Heart right ventricle (tissue), 16 donors: ENCODE measurements at regions of chr6 and their contacts with region 1.

Region 1: GRCh38 chr6:27532820-27533538 is 60.1 kb upstream of the ZNF184 start:
- DNase-seq: no peak
- ATAC-seq: no peak
- H3K4me3 ChIP-seq: no peak overlapping the region
- H3K27ac ChIP-seq: no peak overlapping the region
- H3K4me1 ChIP-seq: no peaks in the 10 kb centered on the region
- H3K27me3 ChIP-seq: peaks cover 0 to 93% (median 68%) of the 10 kb centered on the region in 7 donors
- CTCF ChIP-seq: no peak

Region 2: GRCh38 chr6:27359231-27359630 is 173.7 kb before region 1 on chr6:
- intact Hi-C with region 1: no loop called
- DNase-seq: no peak
- ATAC-seq: no peak
- H3K4me3 ChIP-seq: no peak overlapping the region
- H3K27ac ChIP-seq: no peak overlapping the region
- H3K4me1 ChIP-seq: no peaks in the 10 kb centered on the region
- H3K27me3 ChIP-seq: no peaks in the 10 kb centered on the region
- CTCF ChIP-seq: no peak

Region 3: DNA sequence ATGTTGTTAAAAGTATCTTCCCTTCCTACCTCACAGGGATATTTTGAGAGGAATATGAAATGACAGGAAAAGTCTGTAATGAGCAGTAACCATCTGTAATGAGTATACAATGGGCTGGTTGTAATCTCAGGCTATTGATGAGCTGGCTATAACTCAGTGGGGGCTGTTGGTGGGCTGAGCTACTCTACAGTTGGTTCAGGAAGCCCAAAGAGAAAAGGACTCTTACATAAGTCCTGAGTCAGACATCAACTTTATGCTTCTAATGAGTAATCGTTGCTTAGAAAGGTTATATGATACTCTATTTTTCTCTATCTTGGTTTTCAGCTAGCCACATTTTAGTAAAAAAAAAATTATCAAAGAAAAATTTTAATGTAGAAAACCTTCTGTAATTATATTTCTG is 118.0 kb before region 1 on chr6:
- intact Hi-C with region 1: no loop called
- DNase-seq: no peak
- ATAC-seq: no peak
- H3K4me3 ChIP-seq: no peak overlapping the region
- H3K27ac ChIP-seq: no peak overlapping the region
- H3K4me1 ChIP-seq: no peaks in the 10 kb centered on the region
- H3K27me3 ChIP-seq: no peaks in the 10 kb centered on the region
- CTCF ChIP-seq: no peak

Region 4: GRCh38 chr6:27565821-27566766 is 33.1 kb after region 1 on chr6:
- intact Hi-C with region 1: no loop called
- DNase-seq: no peak
- ATAC-seq: no peak
- H3K4me3 ChIP-seq: no peak overlapping the region
- H3K27ac ChIP-seq: no peak overlapping the region
- H3K4me1 ChIP-seq: no peaks in the 10 kb centered on the region
- H3K27me3 ChIP-seq: peaks cover 10 to 86% (median 82%) of the 10 kb centered on the region in 7 donors
- CTCF ChIP-seq: no peak

Region 5: GRCh38 chr6:27687154-27688013 is 154.4 kb after region 1 on chr6:
- intact Hi-C with region 1: loop called in 1 of 10 experiments (anchors 10 kb)
- DNase-seq: peak; percentile 34 to 49
- ATAC-seq: peak; percentile 59 to 82 (median 71)
- H3K4me3 ChIP-seq: peak overlapping the region in 9 of 10 donors; percentile 24 to 56 (median 45)
- H3K27ac ChIP-seq: no peak overlapping the region
- H3K4me1 ChIP-seq: peaks cover 0 to 20% (median 0%) of the 10 kb centered on the region in 9 donors
- H3K27me3 ChIP-seq: peaks cover 0 to 46% (median 22%) of the 10 kb centered on the region in 7 donors
- CTCF ChIP-seq: peak in 5 of 9 donors; percentile 20 to 53 (median 39)

Region 6: DNA sequence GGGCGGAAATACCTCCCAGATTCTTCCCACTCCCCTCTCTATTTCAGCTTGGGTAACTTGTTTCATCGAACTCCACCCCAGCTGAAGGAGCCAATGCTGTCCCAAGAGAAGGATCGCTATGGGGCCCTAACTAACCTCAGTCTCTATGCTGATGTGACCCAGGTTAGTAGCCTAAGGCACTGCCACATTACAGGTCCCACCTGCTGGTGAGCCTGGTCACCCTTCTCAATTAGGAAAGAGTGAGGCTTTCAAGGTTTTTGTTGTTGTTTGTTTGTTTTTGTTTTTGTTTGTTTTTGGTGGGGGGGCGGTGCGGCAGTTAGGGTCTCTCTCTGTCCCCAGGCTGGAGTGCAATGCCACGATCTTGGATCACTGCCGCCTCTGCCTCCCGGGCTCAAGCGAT is 210.8 kb after region 1 on chr6:
- intact Hi-C with region 1: loop called in 1 of 10 experiments (anchors 10 kb)
- DNase-seq: no peak
- ATAC-seq: no peak
- H3K4me3 ChIP-seq: no peak overlapping the region
- H3K27ac ChIP-seq: no peak overlapping the region
- H3K4me1 ChIP-seq: no peaks in the 10 kb centered on the region
- H3K27me3 ChIP-seq: peaks cover 0 to 100% (median 79%) of the 10 kb centered on the region in 7 donors
- CTCF ChIP-seq: no peak